Endothelial cell of umbilical vein (primary cell): ENCODE measurements at regions of chr7 and their contacts with region 1.

Region 1: DNA sequence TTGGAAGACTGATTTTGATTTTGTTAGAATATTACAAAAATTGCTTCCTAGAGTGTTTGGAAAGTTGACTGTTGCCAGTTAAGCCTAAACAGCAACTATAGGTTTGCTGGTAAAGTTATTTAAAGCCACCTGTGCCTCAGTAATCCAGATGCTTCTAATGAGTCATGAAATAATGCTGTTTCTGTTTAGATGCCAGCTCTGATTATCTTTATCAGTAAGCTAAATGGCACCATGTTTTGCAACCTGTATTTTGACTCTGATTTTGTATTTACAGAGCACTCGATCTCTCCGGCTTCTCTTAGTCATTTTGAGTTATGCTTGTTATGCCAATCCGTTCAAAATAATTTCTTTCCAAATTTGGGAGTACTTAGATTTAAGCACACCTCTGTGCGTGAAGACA is 366.1 kb downstream of the EXOC4 start:
- DNase-seq: no peak
- H3K4me3 ChIP-seq: no peak overlapping the region
- H3K27ac ChIP-seq: no peak overlapping the region
- H3K4me1 ChIP-seq: no peaks in the 10 kb centered on the region
- H3K27me3 ChIP-seq: no peaks in the 10 kb centered on the region
- CTCF ChIP-seq: no peak
- POLR2A ChIP-seq: no peak

Region 2: GRCh38 chr7:133023370-133024071 is 595.4 kb before region 1 on chr7:
- CTCF ChIA-PET with region 1: no interaction called
- POLR2A ChIA-PET with region 1: no interaction called
- dilution Hi-C with region 1: no loop called
- intact Hi-C with region 1: no loop called
- DNase-seq: peak; percentile 17
- H3K4me3 ChIP-seq: no peak overlapping the region
- H3K27ac ChIP-seq: no peak overlapping the region
- H3K4me1 ChIP-seq: no peaks in the 10 kb centered on the region
- H3K27me3 ChIP-seq: no peaks in the 10 kb centered on the region
- CTCF ChIP-seq: no peak
- POLR2A ChIP-seq: no peak

Region 3: DNA sequence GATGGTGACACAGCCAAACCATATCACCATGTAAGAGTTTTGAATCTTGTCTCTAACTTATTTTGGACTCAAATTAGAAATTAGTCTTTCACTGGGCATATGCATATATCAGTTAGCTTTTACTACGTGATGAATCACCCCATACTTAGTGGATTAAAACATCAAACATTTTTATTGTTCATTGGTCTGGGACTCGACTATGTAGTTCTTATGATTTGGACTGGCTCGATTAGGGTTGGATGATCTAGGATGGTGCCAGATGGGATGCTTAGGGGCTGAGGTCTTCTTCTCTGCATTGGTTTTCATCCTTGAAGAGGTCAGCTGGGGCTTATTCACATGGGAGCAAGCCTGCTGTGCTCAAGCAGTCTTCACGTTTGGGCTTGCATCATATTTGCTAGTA is 101.2 kb before region 1 on chr7:
- CTCF ChIA-PET with region 1: no interaction called
- POLR2A ChIA-PET with region 1: no interaction called
- dilution Hi-C with region 1: no loop called
- intact Hi-C with region 1: no loop called
- DNase-seq: no peak
- H3K4me3 ChIP-seq: no peak overlapping the region
- H3K27ac ChIP-seq: no peak overlapping the region
- H3K4me1 ChIP-seq: no peaks in the 10 kb centered on the region
- H3K27me3 ChIP-seq: no peaks in the 10 kb centered on the region
- CTCF ChIP-seq: no peak
- POLR2A ChIP-seq: no peak

Region 4: GRCh38 chr7:133602291-133602690 is 16.7 kb before region 1 on chr7:
- CTCF ChIA-PET with region 1: interaction called, 3 read pairs
- POLR2A ChIA-PET with region 1: no interaction called
- dilution Hi-C with region 1: no loop called
- intact Hi-C with region 1: loop called (anchors 1 kb)
- DNase-seq: peak; percentile 73
- H3K4me3 ChIP-seq: no peak overlapping the region
- H3K27ac ChIP-seq: no peak overlapping the region
- H3K4me1 ChIP-seq: no peaks in the 10 kb centered on the region
- H3K27me3 ChIP-seq: no peaks in the 10 kb centered on the region
- CTCF ChIP-seq: no peak
- POLR2A ChIP-seq: no peak